GM10248 (cell line): ENCODE measurements at regions of chr1 and their contacts with region 1.

Region 1: GRCh38 chr1:161021165-161021960 is 411 bp upstream of the F11R start:
- DNase-seq: peak; percentile 96
- CTCF ChIP-seq: no peak

Region 2: DNA sequence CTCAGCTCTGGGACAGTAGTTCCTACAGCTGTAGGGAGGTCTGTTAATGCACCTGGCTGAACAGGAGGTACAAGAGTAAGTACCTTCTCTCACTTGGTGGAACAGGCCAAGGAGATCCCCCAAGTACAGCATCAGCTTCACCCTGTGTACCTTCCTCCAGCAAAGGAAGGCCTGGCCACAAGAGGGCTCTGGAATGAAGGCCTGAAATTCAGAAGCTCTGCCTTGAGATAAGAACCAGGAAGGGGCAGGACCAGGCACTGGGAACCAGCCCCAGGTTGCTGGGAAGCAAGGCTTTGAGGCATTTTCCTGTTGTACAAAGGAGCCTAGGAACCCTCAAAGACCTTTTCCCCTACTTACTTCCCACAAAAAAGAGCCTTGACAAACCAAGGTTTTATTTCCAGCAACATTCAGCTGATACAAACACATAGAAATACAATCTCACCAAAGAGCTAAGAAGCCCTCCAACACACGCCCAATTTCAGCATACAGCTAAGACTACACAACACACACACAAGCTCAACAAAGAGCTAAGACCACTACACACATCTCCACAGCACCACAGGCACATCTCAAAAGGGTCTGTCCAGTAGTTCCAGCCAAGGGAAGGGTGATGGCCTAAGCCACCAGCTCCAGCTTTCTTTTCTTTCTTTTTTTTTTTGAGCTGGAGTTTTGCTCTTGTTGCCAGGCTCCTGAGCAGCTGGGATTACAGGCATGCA is 23.9 kb before region 1 on chr1:
- CTCF ChIA-PET with region 1: interaction called, 11 read pairs
- POLR2A ChIA-PET with region 1: interaction called, 5 read pairs
- DNase-seq: peak; percentile 66
- CTCF ChIP-seq: peak; percentile 81

Region 3: DNA sequence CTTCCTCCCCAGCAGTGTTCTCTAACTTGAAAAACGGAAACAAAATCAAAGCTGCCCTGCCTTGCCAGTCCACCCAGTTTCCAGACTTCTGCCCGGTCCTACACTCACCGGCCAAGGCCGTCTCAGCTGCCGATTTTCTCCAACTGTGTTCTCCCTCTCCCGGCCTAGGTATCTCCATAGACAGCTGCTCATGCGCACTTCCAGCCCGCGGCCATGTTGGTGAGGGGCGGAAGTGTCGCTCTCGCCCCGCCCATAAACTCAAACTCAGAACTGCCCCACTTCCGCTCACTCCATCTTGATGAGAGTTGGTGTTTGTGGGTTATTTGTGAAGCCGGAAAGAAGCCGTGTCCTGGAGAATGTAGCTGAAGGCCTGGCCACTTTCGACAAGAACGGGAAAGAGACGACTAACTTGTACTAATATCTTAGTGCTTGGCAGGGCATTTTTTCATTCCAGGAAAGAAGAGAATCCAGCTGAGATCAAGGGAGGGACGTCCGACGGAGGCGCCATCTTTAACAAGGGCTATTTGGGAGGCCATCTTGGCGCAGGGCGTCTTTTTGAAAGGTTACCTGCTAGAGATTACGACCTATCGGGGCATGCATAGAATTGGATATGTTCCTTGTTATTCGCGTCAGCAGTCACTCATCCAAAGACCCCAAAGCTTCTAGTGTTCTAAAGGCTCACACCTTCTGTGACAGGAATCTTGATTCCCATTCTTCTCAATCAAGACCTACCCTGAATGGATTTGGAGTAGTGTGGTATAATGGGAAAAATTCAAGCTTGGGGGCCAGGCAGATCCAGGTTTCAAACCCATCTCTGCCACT is 24.6 kb after region 1 on chr1 and contains the start of gene USF1:
- CTCF ChIA-PET with region 1: interaction called, 7 read pairs
- POLR2A ChIA-PET with region 1: interaction called, 13 read pairs
- DNase-seq: peak; percentile 89
- CTCF ChIP-seq: no peak